Activated CD4-positive, alpha-beta memory T cell treated with anti-CD3 and anti-CD28 coated beads, Interleukin-2, amount 10 ng/mL, durations not matched to agents 7 days and 5 days (primary cell): ENCODE measurements at regions of chr2 and their contacts with region 1.

Region 1: GRCh38 chr2:27281855-27282559 is at the start of gene TRIM54:
- DNase-seq: no peak
- H3K4me3 Mint-ChIP-seq: no peak within 1 kb of the TSS
- H3K27ac Mint-ChIP-seq: no peak within 1 kb of the TSS
- H3K4me1 Mint-ChIP-seq: peaks cover 13% of the 10 kb centered on the region
- H3K27me3 Mint-ChIP-seq: peaks cover 54% of the 10 kb centered on the region
- total RNA-seq, gene TRIM54: 0.13 TPM in 1 of 2 experiments, not detected in the other

Region 2: DNA sequence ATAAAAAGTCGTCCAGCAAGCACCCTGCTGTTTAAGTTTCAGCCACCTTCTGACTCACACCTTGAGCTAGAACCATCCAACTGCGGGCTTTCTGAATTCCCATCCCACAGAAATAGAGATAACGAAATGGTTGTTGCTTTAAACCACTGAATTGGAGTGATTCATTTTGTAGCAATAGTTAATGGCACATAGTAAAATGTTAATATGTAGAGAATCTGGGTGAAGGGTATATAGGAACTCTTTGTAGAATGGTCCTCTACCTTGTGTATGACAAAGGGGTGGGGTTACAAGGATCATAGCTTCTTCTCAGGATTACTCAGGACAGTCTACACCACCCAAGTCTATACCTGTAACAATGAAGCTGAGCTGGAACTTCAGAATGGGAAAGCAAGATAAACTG is 314.0 kb before region 1 on chr2:
- CTCF ChIA-PET with region 1: interaction called, 23 read pairs
- POLR2A ChIA-PET with region 1: no interaction called
- DNase-seq: no peak
- H3K4me3 Mint-ChIP-seq: no peak overlapping the region
- H3K27ac Mint-ChIP-seq: no peak overlapping the region
- H3K4me1 Mint-ChIP-seq: peaks cover 21% of the 10 kb centered on the region
- H3K27me3 Mint-ChIP-seq: peaks cover 44% of the 10 kb centered on the region

Region 3: GRCh38 chr2:27095745-27096651 is 186.0 kb before region 1 on chr2:
- CTCF ChIA-PET with region 1: interaction called, 75 read pairs
- POLR2A ChIA-PET with region 1: interaction called, 3 read pairs
- DNase-seq: peak; percentile 60
- H3K4me3 Mint-ChIP-seq: no peak overlapping the region
- H3K27ac Mint-ChIP-seq: no peak overlapping the region
- H3K4me1 Mint-ChIP-seq: peaks cover 12% of the 10 kb centered on the region
- H3K27me3 Mint-ChIP-seq: no peaks in the 10 kb centered on the region

Region 4: GRCh38 chr2:27170581-27171333 is 111.2 kb before region 1 on chr2:
- CTCF ChIA-PET with region 1: interaction called, 20 read pairs
- POLR2A ChIA-PET with region 1: interaction called, 3 read pairs
- DNase-seq: no peak
- H3K4me3 Mint-ChIP-seq: no peak overlapping the region
- H3K27ac Mint-ChIP-seq: no peak overlapping the region
- H3K4me1 Mint-ChIP-seq: peaks cover 3% of the 10 kb centered on the region
- H3K27me3 Mint-ChIP-seq: peaks cover 13% of the 10 kb centered on the region

Region 5: DNA sequence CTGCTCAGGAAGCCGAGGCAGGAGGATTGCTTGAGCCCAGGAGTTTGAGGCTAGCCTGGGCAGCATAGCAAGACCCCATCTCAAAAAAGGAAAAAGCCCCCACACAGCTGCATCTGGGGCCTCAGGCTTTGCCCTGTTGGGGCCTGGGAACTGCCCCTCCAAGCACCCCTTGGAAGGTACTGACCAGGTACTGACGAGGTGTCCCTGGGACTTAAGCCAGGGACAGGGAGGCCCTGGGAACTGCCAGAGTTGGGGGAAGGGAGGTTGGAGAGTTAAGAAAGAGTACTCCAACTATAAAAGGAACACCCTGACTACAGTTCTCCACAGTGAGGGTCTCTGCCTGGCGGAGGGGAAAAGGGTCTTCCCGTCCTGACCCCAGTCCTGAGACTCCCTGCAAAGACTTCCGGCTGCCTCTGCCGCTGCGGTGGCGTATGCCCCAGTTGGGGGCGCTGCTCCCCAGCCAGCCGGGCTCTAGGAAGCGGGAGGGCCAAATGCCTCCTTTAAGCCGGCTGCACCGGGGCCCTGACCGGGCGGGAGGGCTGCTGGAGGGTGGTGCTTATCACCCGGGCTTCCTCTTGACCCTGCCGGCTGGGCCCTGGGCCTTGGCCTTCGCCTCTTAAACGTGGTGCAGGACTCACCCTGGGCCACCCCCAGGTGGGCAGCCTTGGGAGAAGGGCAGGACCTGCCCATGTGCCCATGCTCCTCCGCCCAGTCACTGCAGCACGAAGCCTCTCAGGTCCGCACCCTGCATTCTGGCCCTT is 31.9 kb before region 1 on chr2:
- CTCF ChIA-PET with region 1: interaction called, 19 read pairs
- POLR2A ChIA-PET with region 1: interaction called, 7 read pairs
- DNase-seq: peak; percentile 64
- H3K4me3 Mint-ChIP-seq: no peak overlapping the region
- H3K27ac Mint-ChIP-seq: no peak overlapping the region
- H3K4me1 Mint-ChIP-seq: no peaks in the 10 kb centered on the region
- H3K27me3 Mint-ChIP-seq: peaks cover 9% of the 10 kb centered on the region

Region 6: DNA sequence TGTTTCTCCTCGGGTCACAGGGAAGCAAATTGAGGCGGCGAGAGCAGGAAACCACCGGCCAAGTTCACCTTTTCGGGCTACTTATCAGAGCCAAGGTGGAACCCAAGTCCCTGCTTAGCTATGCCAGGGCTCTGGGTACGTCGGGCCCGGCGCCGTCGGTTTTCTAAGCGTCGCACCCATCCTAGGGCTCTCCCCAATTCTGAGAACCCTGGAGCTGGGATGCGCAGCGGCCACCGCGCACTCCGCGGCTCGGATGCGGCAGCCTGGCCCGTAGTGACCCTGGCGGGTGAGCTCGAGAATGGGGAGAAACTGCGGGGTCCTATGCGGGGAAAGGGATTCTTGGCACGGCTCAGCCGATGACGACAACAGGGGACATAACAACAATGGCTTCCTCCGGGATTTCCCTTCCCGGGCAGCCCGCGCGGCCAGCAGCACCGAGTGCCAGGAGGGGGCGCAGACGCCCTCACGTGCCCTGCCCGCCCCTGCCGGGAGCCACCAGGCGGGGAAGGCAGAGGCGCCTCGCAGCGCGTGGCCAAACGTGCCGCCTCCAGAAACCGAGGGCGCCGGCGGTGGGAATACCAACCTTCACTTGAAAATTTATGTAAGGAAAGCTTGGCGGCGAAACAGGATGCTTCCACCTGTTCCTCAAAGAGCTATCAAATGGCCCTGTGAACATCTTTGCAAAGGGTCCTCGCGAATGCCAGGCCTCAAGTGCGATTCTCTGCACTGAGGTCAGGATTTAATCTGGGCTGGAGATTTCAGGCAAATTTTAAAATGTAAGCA is 17.1 kb before region 1 on chr2:
- CTCF ChIA-PET with region 1: interaction called, 38 read pairs
- POLR2A ChIA-PET with region 1: interaction called, 5 read pairs
- DNase-seq: peak; percentile 47
- H3K4me3 Mint-ChIP-seq: peak overlapping the region; percentile 50
- H3K27ac Mint-ChIP-seq: no peak overlapping the region
- H3K4me1 Mint-ChIP-seq: peaks cover 34% of the 10 kb centered on the region
- H3K27me3 Mint-ChIP-seq: peaks cover 46% of the 10 kb centered on the region

Region 7: DNA sequence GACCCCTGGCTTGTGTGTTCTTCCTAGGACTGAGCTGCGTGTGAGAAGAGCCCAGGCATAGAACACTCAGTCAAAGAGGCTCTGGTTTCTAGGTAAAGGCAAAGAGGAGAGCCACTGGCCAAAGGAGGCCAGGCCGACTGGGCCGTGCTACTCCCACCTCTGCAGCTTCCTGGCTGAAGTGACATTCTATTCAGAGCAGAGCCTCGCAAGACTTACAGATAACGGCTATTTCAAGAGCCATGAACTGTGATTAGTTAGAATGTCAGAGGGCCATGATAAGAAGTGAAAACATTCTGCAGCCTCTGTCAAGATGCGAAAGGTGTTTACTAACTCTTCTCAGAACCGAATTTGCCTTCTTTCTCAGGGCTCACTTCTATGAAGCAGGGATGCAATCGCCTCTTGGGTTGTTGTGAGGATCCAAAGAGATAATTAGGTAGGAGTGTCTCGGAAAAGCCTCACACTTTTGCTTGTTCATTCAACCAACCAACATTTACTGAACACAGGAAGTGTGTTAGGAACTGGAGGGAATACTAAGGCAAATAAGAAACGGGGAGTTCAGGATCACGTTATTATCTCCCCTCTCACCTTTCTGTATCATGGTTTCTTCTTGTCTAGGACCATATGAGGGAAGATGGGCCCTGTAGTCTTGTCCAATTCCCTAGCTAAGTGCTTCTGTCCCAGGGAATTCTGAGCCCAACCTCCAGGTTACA is 10.2 kb before region 1 on chr2:
- CTCF ChIA-PET with region 1: interaction called, 38 read pairs
- POLR2A ChIA-PET with region 1: no interaction called
- DNase-seq: no peak
- H3K4me3 Mint-ChIP-seq: no peak overlapping the region
- H3K27ac Mint-ChIP-seq: no peak overlapping the region
- H3K4me1 Mint-ChIP-seq: peaks cover 5% of the 10 kb centered on the region
- H3K27me3 Mint-ChIP-seq: peaks cover 28% of the 10 kb centered on the region